Caco-2 (cell line): ENCODE measurements at regions of chr13 and their contacts with region 1.

Region 1: DNA sequence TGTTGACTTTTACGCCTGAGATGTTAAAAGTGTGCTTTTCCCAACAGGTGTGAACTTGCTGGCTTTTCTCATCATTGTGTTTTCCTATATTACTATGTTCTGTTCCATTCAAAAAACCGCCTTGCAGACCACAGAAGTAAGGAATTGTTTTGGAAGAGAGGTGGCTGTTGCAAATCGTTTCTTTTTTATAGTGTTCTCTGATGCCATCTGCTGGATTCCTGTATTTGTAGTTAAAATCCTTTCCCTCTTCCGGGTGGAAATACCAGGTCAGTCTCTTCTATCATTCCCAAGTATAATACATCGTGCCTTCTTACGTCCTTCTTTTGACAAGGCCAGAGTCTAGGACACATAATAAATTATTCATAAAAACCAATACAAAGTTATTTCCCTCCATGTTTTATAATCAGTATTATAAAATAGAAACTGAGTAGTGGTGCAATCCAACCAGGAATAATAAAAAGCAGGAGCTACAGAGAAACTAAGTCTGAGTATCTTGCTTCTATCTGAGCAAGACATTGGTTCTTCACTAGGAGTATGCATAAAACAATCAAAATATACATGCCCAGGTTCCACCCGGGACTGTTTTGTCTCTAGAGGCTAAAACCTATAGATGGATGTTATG is 57.9 kb downstream of the RXFP2 start:
- DNase-seq: peak in 1 of 2 experiments; percentile 24
- H3K4me3 ChIP-seq: no peak overlapping the region
- H3K4me3 Mint-ChIP-seq: no peak overlapping the region
- H3K27ac Mint-ChIP-seq: no peak overlapping the region
- H3K4me1 ChIP-seq: 0 out of 2 replicates have a peak, but pooled peaks cover 6% of the 10 kb centered on the region
- H3K4me1 Mint-ChIP-seq: peaks cover 7% of the 10 kb centered on the region
- H3K27me3 ChIP-seq: no peaks in the 10 kb centered on the region
- H3K27me3 Mint-ChIP-seq: peaks cover 3% of the 10 kb centered on the region
- CTCF ChIP-seq: peak; percentile 38 to 39

Region 2: GRCh38 chr13:31431722-31432137 is 365.5 kb before region 1 on chr13:
- CTCF ChIA-PET with region 1: no interaction called
- POLR2A ChIA-PET with region 1: no interaction called
- intact Hi-C with region 1: loop called (anchors 2 kb)
- DNase-seq: peak; percentile 63 to 67
- H3K4me3 ChIP-seq: no peak overlapping the region
- H3K4me3 Mint-ChIP-seq: no peak overlapping the region
- H3K27ac Mint-ChIP-seq: no peak overlapping the region
- H3K4me1 ChIP-seq: peaks cover 1% of the 10 kb centered on the region; the same call in 1 of the 2 replicates
- H3K4me1 Mint-ChIP-seq: peaks cover 1% of the 10 kb centered on the region
- H3K27me3 ChIP-seq: no peaks in the 10 kb centered on the region
- H3K27me3 Mint-ChIP-seq: peaks cover 3% of the 10 kb centered on the region
- CTCF ChIP-seq: peak; percentile 92 to 93

Region 3: GRCh38 chr13:31767171-31767900 is 29.9 kb before region 1 on chr13:
- CTCF ChIA-PET with region 1: no interaction called
- POLR2A ChIA-PET with region 1: no interaction called
- intact Hi-C with region 1: no loop called
- DNase-seq: no peak
- H3K4me3 ChIP-seq: no peak overlapping the region
- H3K4me3 Mint-ChIP-seq: no peak overlapping the region
- H3K27ac Mint-ChIP-seq: no peak overlapping the region
- H3K4me1 ChIP-seq: no peaks in the 10 kb centered on the region
- H3K4me1 Mint-ChIP-seq: no peaks in the 10 kb centered on the region
- H3K27me3 ChIP-seq: no peaks in the 10 kb centered on the region
- H3K27me3 Mint-ChIP-seq: peaks cover 7% of the 10 kb centered on the region
- CTCF ChIP-seq: no peak

Region 4: GRCh38 chr13:31827707-31828106 is 30.4 kb after region 1 on chr13:
- CTCF ChIA-PET with region 1: no interaction called
- POLR2A ChIA-PET with region 1: no interaction called
- intact Hi-C with region 1: loop called (anchors 1 kb)
- DNase-seq: no peak
- H3K4me3 ChIP-seq: no peak overlapping the region
- H3K4me3 Mint-ChIP-seq: no peak overlapping the region
- H3K27ac Mint-ChIP-seq: no peak overlapping the region
- H3K4me1 ChIP-seq: no peaks in the 10 kb centered on the region
- H3K4me1 Mint-ChIP-seq: no peaks in the 10 kb centered on the region
- H3K27me3 ChIP-seq: peaks cover 1% of the 10 kb centered on the region
- H3K27me3 Mint-ChIP-seq: peaks cover 6% of the 10 kb centered on the region
- CTCF ChIP-seq: no peak